ENCODE measurements at regions of chr1 and their contacts with region 1.

Region 1: DNA sequence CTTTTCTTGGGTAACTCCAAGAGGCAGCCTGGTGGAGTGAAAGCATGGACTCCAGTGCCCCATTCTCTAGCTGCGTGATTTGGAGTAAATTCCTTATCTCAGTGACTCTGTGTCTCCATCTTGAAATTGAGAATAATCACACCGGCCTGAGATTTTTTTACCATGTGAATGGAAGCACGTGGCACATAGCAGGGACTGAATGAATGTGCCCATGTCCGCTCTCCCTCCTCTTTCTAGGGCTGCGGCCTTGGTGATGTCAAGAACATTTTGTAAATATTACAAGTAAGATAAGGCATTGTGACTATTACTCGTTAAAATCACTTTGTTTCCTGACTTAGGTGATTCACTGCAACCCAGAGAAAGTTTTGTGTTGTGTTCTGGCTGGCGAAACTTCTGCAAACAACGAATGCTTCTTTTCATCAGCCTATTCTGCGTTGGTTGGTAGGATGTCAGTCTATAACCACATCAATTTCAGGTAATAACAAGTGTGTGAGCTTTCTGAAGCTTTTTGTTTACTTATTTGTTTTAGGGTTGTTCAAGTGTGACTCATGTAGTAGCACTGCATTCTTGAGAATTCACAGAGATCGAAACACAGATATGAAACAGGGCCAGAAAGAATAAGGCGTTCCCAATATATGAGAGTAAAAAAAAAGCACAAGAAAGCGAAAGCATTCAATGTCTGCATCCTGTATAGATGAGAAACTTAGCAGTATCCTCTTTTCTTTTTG is 135.7 kb upstream of the SLC45A1 start:
- DNase-seq: peak; percentile 83
- H3K4me3 Mint-ChIP-seq: peak overlapping the region; percentile 50
- H3K27ac Mint-ChIP-seq: peak overlapping the region; percentile 82
- H3K4me1 Mint-ChIP-seq: peaks cover 18% of the 10 kb centered on the region
- H3K27me3 Mint-ChIP-seq: peaks cover 3% of the 10 kb centered on the region

Region 2: GRCh38 chr1:7930645-7931445 is 251.4 kb before region 1 on chr1:
- intact Hi-C with region 1: no loop called
- DNase-seq: no peak
- H3K4me3 Mint-ChIP-seq: peak overlapping the region; percentile 63
- H3K27ac Mint-ChIP-seq: peak overlapping the region; percentile 69
- H3K4me1 Mint-ChIP-seq: peaks cover 24% of the 10 kb centered on the region
- H3K27me3 Mint-ChIP-seq: peaks cover 2% of the 10 kb centered on the region

Region 3: GRCh38 chr1:8031176-8031785 is 150.9 kb before region 1 on chr1:
- intact Hi-C with region 1: no loop called
- DNase-seq: no peak
- H3K4me3 Mint-ChIP-seq: no peak overlapping the region
- H3K27ac Mint-ChIP-seq: no peak overlapping the region
- H3K4me1 Mint-ChIP-seq: peaks cover 7% of the 10 kb centered on the region
- H3K27me3 Mint-ChIP-seq: peaks cover 30% of the 10 kb centered on the region

Region 4: DNA sequence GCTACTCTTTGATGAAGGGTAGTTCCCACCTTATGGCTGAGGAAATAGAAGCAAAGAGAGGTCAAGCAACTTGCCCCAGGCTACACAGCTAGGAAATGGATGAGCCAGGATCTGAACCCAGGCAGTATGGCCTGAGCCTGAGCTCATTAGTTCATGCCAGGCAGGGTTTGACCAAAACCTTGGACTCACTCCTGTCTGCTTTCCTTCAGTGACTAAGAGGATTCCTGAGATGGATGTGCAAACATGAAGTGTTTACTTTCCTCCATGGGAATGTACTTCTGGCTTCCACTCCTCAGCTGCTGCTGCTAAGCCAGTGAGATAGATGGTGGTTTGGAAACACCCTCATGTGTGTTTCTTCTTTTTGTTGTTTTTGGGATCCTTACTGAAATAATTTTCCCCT is 121.0 kb before region 1 on chr1:
- intact Hi-C with region 1: no loop called
- DNase-seq: no peak
- H3K4me3 Mint-ChIP-seq: no peak overlapping the region
- H3K27ac Mint-ChIP-seq: no peak overlapping the region
- H3K4me1 Mint-ChIP-seq: no peaks in the 10 kb centered on the region
- H3K27me3 Mint-ChIP-seq: peaks cover 14% of the 10 kb centered on the region

Region 5: GRCh38 chr1:8152731-8153702 is 29.2 kb before region 1 on chr1:
- intact Hi-C with region 1: loop called (anchors 2 kb)
- DNase-seq: peak; percentile 84
- H3K4me3 Mint-ChIP-seq: peak overlapping the region; percentile 78
- H3K27ac Mint-ChIP-seq: peak overlapping the region; percentile 94
- H3K4me1 Mint-ChIP-seq: peaks cover 35% of the 10 kb centered on the region
- H3K27me3 Mint-ChIP-seq: peaks cover 18% of the 10 kb centered on the region

Region 6: GRCh38 chr1:8169364-8170058 is 12.7 kb before region 1 on chr1:
- intact Hi-C with region 1: loop called (anchors 1 kb)
- DNase-seq: peak; percentile 86
- H3K4me3 Mint-ChIP-seq: peak overlapping the region; percentile 48
- H3K27ac Mint-ChIP-seq: peak overlapping the region; percentile 87
- H3K4me1 Mint-ChIP-seq: peaks cover 24% of the 10 kb centered on the region
- H3K27me3 Mint-ChIP-seq: no peaks in the 10 kb centered on the region

Measured in activated CD4-positive, alpha-beta T cell treated with anti-CD3 and anti-CD28 coated beads, Interleukin-2, amount 10 ng/mL, durations not matched to agents 24 days and 14 days (primary cell).